ENCODE measurements at regions of chr2 and their contacts with region 1.

Region 1: GRCh38 chr2:95709831-95710230 is 118.0 kb downstream of the TRIM43 start:
- DNase-seq: no peak
- ATAC-seq: no peak
- H3K4me3 ChIP-seq: no peak overlapping the region
- H3K4me3 Mint-ChIP-seq: no peak overlapping the region
- H3K27ac ChIP-seq: no peak overlapping the region
- H3K27ac Mint-ChIP-seq: no peak overlapping the region
- H3K4me1 ChIP-seq: no peaks in the 10 kb centered on the region
- H3K4me1 Mint-ChIP-seq: no peaks in the 10 kb centered on the region
- H3K27me3 ChIP-seq: no peaks in the 10 kb centered on the region
- H3K27me3 Mint-ChIP-seq: peaks cover 6% of the 10 kb centered on the region
- CTCF ChIP-seq: no peak

Region 2: GRCh38 chr2:95685513-95685912 is 24.3 kb before region 1 on chr2:
- CTCF ChIA-PET with region 1: no interaction called
- POLR2A ChIA-PET with region 1: no interaction called
- intact Hi-C with region 1: loop called in 1 of 2 experiments (anchors 2 kb)
- DNase-seq: no peak
- ATAC-seq: no peak
- H3K4me3 ChIP-seq: no peak overlapping the region
- H3K4me3 Mint-ChIP-seq: no peak overlapping the region
- H3K27ac ChIP-seq: no peak overlapping the region
- H3K27ac Mint-ChIP-seq: no peak overlapping the region
- H3K4me1 ChIP-seq: no peaks in the 10 kb centered on the region
- H3K4me1 Mint-ChIP-seq: peaks cover 12% of the 10 kb centered on the region
- H3K27me3 ChIP-seq: peaks cover 0 to 2% of the 10 kb centered on the region in 2 experiments
- H3K27me3 Mint-ChIP-seq: peaks cover 12% of the 10 kb centered on the region
- CTCF ChIP-seq: no peak

Measured in CD8-positive, alpha-beta T cell (primary cell).